ENCODE measurements at regions of chr5 and their contacts with region 1.

Region 1: DNA sequence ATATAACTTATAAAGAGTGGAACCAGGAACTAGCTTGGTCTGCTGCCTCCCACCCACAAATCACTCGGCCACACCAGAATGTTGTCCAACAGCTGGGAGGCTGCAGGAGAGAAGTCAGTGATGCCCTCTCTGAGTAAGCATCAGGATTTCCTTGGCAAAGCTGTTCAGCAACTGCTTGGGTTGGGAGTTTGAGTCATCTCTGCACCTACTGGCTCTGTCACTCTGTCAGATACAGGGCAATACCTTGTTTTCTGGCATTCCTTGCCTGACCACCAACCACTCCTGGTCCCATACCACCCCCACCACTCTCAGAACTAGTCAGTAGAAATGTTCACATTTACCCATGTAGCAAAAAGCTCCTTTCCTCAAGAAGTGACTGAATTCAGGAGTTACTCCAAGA is 36.8 kb upstream of the GCNT4 start:
- DNase-seq: peak; percentile 66
- H3K4me3 Mint-ChIP-seq: no peak overlapping the region
- H3K27ac Mint-ChIP-seq: no peak overlapping the region
- H3K4me1 Mint-ChIP-seq: peaks cover 15% of the 10 kb centered on the region
- H3K27me3 Mint-ChIP-seq: no peaks in the 10 kb centered on the region

Region 2: DNA sequence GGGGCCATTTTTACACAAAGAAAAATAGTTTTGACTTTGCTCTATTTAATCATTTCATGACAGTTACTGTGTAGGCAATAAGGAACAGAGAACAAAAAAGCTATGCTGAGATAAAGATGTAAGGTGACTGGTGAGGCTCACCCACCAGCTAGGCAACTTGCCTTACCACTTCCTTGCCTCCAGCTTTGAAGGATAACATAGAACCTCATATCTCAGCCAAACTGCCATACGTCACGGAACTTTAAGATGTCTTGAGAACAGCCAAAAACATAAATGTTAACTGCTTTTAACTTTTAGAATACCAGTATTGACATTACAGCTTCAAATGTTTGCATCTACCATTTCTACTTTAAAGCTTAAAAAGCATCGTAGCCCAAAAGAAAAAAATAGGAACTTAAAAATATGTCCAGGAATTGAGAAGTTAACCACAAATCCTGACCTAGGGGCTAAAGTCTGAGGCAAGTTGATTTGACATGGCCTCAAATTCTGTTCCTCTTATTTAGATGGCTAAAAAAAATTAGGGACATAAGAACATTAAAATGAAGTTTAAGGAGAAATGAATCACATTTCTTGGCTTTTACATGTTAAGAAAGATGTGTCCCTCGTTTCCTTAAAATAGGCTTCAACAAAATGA is 29.1 kb before region 1 on chr5:
- CTCF ChIA-PET with region 1: no interaction called
- POLR2A ChIA-PET with region 1: interaction called, 5 read pairs
- intact Hi-C with region 1: loop called (anchors 1 kb)
- DNase-seq: peak; percentile 61
- H3K4me3 Mint-ChIP-seq: no peak overlapping the region
- H3K27ac Mint-ChIP-seq: peak overlapping the region; percentile 88
- H3K4me1 Mint-ChIP-seq: peaks cover 70% of the 10 kb centered on the region
- H3K27me3 Mint-ChIP-seq: no peaks in the 10 kb centered on the region

Region 3: DNA sequence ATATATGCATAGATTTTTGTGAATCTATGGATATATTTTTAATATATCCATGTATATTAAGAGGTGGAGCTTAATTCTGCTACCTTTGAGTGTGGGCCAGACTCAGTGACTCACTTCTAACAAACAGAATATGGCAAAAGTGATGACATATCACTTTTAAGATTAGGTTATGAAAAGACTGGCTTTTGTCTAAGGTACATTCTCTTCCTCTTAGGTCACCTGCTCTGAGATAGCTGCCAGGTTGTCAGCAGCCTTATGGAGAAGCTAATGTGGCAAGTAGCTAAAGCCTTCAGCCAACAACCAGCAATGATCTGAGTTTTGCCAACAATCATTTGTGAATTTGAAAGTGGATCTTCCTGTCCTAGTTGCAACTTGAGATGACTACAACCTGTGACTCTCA is 63.7 kb after region 1 on chr5:
- CTCF ChIA-PET with region 1: no interaction called
- POLR2A ChIA-PET with region 1: no interaction called
- intact Hi-C with region 1: no loop called
- DNase-seq: no peak
- H3K4me3 Mint-ChIP-seq: no peak overlapping the region
- H3K27ac Mint-ChIP-seq: no peak overlapping the region
- H3K4me1 Mint-ChIP-seq: peaks cover 5% of the 10 kb centered on the region
- H3K27me3 Mint-ChIP-seq: no peaks in the 10 kb centered on the region

Region 4: GRCh38 chr5:75192804-75193203 is 103.7 kb after region 1 on chr5:
- CTCF ChIA-PET with region 1: no interaction called
- POLR2A ChIA-PET with region 1: no interaction called
- intact Hi-C with region 1: no loop called
- DNase-seq: peak; percentile 22
- H3K4me3 Mint-ChIP-seq: no peak overlapping the region
- H3K27ac Mint-ChIP-seq: no peak overlapping the region
- H3K4me1 Mint-ChIP-seq: peaks cover 10% of the 10 kb centered on the region
- H3K27me3 Mint-ChIP-seq: no peaks in the 10 kb centered on the region